ENCODE measurements at regions of chr6 and their contacts with region 1.

Region 1: GRCh38 chr6:52664186-52664990 is 6.5 kb upstream of the TMEM14A start:
- DNase-seq: peak; percentile 11 to 70 (median 29)
- ATAC-seq: peak; percentile 71
- H3K4me3 ChIP-seq: peak overlapping the region; percentile 60
- H3K4me3 Mint-ChIP-seq: no peak overlapping the region
- H3K27ac ChIP-seq: no peak overlapping the region
- H3K27ac Mint-ChIP-seq: no peak overlapping the region
- H3K4me1 ChIP-seq: peaks cover 11% of the 10 kb centered on the region
- H3K4me1 Mint-ChIP-seq: no peaks in the 10 kb centered on the region
- H3K27me3 ChIP-seq: peaks cover 4 to 6% of the 10 kb centered on the region in 2 experiments
- H3K27me3 Mint-ChIP-seq: no peaks in the 10 kb centered on the region
- CTCF ChIP-seq: no peak

Region 2: GRCh38 chr6:51855310-51856082 is 808.9 kb before region 1 on chr6:
- CTCF ChIA-PET with region 1: no interaction called
- POLR2A ChIA-PET with region 1: no interaction called
- intact Hi-C with region 1: loop called (anchors 5 kb)
- DNase-seq: peak in 3 of 14 experiments; percentile 34 to 57 (median 51)
- ATAC-seq: no peak
- H3K4me3 ChIP-seq: no peak overlapping the region
- H3K4me3 Mint-ChIP-seq: no peak overlapping the region
- H3K27ac ChIP-seq: no peak overlapping the region
- H3K27ac Mint-ChIP-seq: no peak overlapping the region
- H3K4me1 ChIP-seq: no peaks in the 10 kb centered on the region
- H3K4me1 Mint-ChIP-seq: no peaks in the 10 kb centered on the region
- H3K27me3 ChIP-seq: peaks cover 0 to 2% of the 10 kb centered on the region in 2 experiments
- H3K27me3 Mint-ChIP-seq: peaks cover 14% of the 10 kb centered on the region
- CTCF ChIP-seq: peak; percentile 57

Region 3: GRCh38 chr6:52263709-52264540 is 400.5 kb before region 1 on chr6:
- CTCF ChIA-PET with region 1: no interaction called
- POLR2A ChIA-PET with region 1: no interaction called
- intact Hi-C with region 1: loop called (anchors 2 to 5 kb)
- DNase-seq: peak; percentile 45 to 81 (median 60)
- ATAC-seq: peak; percentile 89
- H3K4me3 ChIP-seq: no peak overlapping the region
- H3K4me3 Mint-ChIP-seq: no peak overlapping the region
- H3K27ac ChIP-seq: no peak overlapping the region
- H3K27ac Mint-ChIP-seq: peak overlapping the region; percentile 42
- H3K4me1 ChIP-seq: no peaks in the 10 kb centered on the region
- H3K4me1 Mint-ChIP-seq: peaks cover 15% of the 10 kb centered on the region
- H3K27me3 ChIP-seq: no peaks in the 10 kb centered on the region
- H3K27me3 Mint-ChIP-seq: no peaks in the 10 kb centered on the region
- CTCF ChIP-seq: peak; percentile 98

Region 4: DNA sequence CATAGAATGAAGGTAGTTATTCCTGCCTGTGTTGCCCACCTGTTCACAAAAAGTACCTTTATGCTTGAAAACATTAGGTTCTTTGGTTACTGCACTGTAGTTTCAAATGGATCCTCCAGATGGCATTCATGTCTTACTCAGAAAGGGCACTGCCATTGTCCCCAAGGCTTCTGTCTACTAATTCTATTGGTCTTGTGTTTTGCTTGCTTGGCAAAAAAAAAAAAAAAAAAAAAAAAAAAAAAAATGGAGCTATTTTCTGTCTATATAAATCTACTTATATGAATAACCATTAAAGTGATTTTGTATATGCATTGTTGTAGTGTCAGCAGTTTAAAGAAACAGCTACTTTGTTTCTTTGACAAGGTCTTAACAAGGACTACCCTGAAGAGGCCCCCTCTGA is 256.9 kb before region 1 on chr6:
- CTCF ChIA-PET with region 1: no interaction called
- POLR2A ChIA-PET with region 1: interaction called, 3 read pairs
- intact Hi-C with region 1: loop called in 1 of 2 experiments (anchors 1 kb)
- DNase-seq: peak in 4 of 14 experiments; percentile 19 to 69 (median 61)
- ATAC-seq: peak; percentile 97
- H3K4me3 ChIP-seq: no peak overlapping the region
- H3K4me3 Mint-ChIP-seq: no peak overlapping the region
- H3K27ac ChIP-seq: no peak overlapping the region
- H3K27ac Mint-ChIP-seq: peak overlapping the region; percentile 81
- H3K4me1 ChIP-seq: peaks cover 11% of the 10 kb centered on the region
- H3K4me1 Mint-ChIP-seq: peaks cover 38% of the 10 kb centered on the region
- H3K27me3 ChIP-seq: no peaks in the 10 kb centered on the region
- H3K27me3 Mint-ChIP-seq: no peaks in the 10 kb centered on the region
- CTCF ChIP-seq: peak; percentile 57

Region 5: DNA sequence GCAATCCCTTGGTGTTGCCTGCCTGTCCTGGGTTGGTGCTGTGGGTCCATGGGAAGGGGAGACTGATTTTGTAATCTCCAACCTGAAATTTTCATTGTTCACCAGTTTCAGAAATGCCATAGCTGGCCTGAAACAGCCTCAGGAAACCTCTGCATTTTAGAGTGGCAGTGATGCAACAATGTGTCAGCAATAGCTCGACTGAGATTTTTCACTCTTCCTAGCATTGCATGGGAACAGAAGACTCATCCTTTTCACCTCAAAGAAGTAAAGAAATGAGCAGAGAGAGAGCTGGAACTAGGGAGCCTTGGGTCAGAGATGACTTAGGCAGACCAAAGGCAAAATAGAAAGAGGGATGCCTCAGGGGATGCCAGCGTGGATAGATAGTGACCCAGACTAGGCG is 17.2 kb before region 1 on chr6:
- CTCF ChIA-PET with region 1: interaction called, 18 read pairs
- POLR2A ChIA-PET with region 1: interaction called, 5 read pairs
- intact Hi-C with region 1: loop called in 1 of 2 experiments (anchors 1 kb)
- DNase-seq: no peak
- ATAC-seq: no peak
- H3K4me3 ChIP-seq: no peak overlapping the region
- H3K4me3 Mint-ChIP-seq: no peak overlapping the region
- H3K27ac ChIP-seq: no peak overlapping the region
- H3K27ac Mint-ChIP-seq: no peak overlapping the region
- H3K4me1 ChIP-seq: no peaks in the 10 kb centered on the region
- H3K4me1 Mint-ChIP-seq: peaks cover 5% of the 10 kb centered on the region
- H3K27me3 ChIP-seq: peaks cover 0 to 2% of the 10 kb centered on the region in 2 experiments
- H3K27me3 Mint-ChIP-seq: peaks cover 9% of the 10 kb centered on the region
- CTCF ChIP-seq: no peak

Region 6: GRCh38 chr6:52881996-52882841 is 217.8 kb after region 1 on chr6:
- CTCF ChIA-PET with region 1: no interaction called
- POLR2A ChIA-PET with region 1: no interaction called
- intact Hi-C with region 1: no loop called
- DNase-seq: peak; percentile 42 to 82 (median 52)
- ATAC-seq: peak; percentile 99
- H3K4me3 ChIP-seq: peak overlapping the region; percentile 59
- H3K4me3 Mint-ChIP-seq: peak overlapping the region; percentile 83
- H3K27ac ChIP-seq: no peak overlapping the region
- H3K27ac Mint-ChIP-seq: no peak overlapping the region
- H3K4me1 ChIP-seq: peaks cover 6% of the 10 kb centered on the region
- H3K4me1 Mint-ChIP-seq: no peaks in the 10 kb centered on the region
- H3K27me3 ChIP-seq: no peaks in the 10 kb centered on the region
- H3K27me3 Mint-ChIP-seq: no peaks in the 10 kb centered on the region
- CTCF ChIP-seq: peak; percentile 91

Region 7: DNA sequence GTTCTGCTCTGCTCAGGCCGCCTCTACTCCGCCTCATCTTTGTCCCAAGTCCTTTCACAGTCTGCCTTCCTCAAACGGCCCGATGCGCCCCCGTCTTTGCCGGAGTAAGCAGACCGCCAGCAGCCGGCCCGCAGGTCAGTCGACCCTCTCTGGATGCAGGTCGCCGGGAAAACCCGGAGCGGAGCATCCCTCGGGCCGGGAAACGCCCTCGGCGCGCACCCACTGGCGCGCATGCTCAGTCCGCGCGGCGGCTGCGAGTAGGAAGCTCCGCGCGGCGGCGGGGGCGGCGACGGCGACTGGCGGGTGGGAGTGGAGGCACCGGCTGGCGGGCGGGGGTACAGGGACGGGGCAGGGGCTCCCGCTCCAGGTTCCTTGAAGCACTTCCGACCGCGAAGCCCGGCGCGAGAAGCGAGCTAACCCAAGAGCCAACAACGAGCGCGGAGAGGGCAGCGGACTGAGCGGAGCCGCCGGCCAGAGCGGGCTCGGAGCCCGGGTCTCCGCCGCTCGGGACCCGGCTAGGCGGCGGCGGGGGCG is 1130.4 kb after region 1 on chr6 and contains the start of gene LRRC1:
- CTCF ChIA-PET with region 1: no interaction called
- POLR2A ChIA-PET with region 1: no interaction called
- intact Hi-C with region 1: loop called in 1 of 2 experiments (anchors 10 kb)
- DNase-seq: peak; percentile 65 to 91 (median 78)
- ATAC-seq: peak; percentile 63
- H3K4me3 ChIP-seq: peak within 1 kb of the TSS; percentile 83
- H3K4me3 Mint-ChIP-seq: peak within 1 kb of the TSS; percentile 97
- H3K27ac ChIP-seq: no peak within 1 kb of the TSS
- H3K27ac Mint-ChIP-seq: peak within 1 kb of the TSS; percentile 82
- H3K4me1 ChIP-seq: peaks cover 28% of the 10 kb centered on the region
- H3K4me1 Mint-ChIP-seq: peaks cover 34% of the 10 kb centered on the region
- H3K27me3 ChIP-seq: peaks cover 5 to 13% of the 10 kb centered on the region in 2 experiments
- H3K27me3 Mint-ChIP-seq: peaks cover 13% of the 10 kb centered on the region
- CTCF ChIP-seq: no peak
- total RNA-seq, gene LRRC1: 0.78 to 1.1 TPM